Gastrocnemius medialis (tissue), 4 donors: ENCODE measurements at regions of chr18 and their contacts with region 1.

Region 1: DNA sequence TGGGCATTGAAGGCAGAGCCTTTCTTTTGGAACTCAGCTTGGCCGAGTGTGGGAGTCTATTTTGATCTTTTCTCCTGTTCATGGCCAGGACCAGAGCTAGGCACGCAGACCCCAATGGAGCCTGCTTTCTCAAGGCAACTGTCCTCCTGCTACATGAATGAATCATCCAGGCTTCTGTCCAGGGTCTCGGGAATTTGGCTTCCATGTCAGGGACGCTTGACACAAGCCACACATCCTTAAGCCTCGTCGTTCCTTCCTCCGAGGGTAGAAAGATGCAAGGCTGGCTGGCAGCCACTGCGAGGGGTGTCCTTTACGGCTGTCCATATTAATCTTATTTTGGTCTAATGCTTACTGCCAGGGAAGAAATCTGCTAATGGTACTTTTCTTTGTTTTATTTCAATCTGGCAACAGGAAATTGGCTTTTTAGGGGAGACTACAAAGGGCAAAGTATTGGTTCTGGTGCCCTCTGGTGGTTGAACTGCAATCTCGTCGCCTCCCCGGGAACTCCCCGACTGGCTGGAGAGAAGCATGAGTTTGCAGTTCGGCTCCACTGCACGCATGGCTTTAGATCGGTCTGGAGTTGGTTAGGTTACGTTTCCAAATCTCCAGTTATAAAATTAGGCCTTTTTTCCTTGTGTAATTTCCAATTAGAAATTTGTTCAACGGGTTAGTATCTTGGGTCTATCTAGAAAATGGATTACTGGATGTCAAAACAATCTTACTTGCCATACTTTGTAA is 135.2 kb downstream of the ALPK2 start:
- DNase-seq: peak; percentile 64 to 76
- ATAC-seq: peak; percentile 90 to 91
- H3K4me3 ChIP-seq: peak overlapping the region in 2 of 4 donors; percentile 21 to 23
- H3K27ac ChIP-seq: peak overlapping the region; percentile 56 to 80 (median 72)
- H3K4me1 ChIP-seq: peaks cover 19 to 30% of the 10 kb centered on the region in 2 donors
- H3K27me3 ChIP-seq: no peaks in the 10 kb centered on the region
- CTCF ChIP-seq: peak; percentile 78 to 86 (median 83)
- POLR2A ChIP-seq: no peak

Region 2: GRCh38 chr18:58223717-58224424 is 269.8 kb before region 1 on chr18:
- in situ Hi-C with region 1: loop called in 1 of 4 experiments (anchors 25 kb)
- intact Hi-C with region 1: no loop called
- DNase-seq: peak; percentile 33 to 53
- ATAC-seq: peak; percentile 98 to 99
- H3K4me3 ChIP-seq: peak overlapping the region in 2 of 4 donors; percentile 11 to 25
- H3K27ac ChIP-seq: peak overlapping the region; percentile 32 to 71 (median 64)
- H3K4me1 ChIP-seq: peaks cover 10 to 12% of the 10 kb centered on the region in 2 donors
- H3K27me3 ChIP-seq: no peaks in the 10 kb centered on the region
- CTCF ChIP-seq: no peak
- POLR2A ChIP-seq: no peak

Region 3: DNA sequence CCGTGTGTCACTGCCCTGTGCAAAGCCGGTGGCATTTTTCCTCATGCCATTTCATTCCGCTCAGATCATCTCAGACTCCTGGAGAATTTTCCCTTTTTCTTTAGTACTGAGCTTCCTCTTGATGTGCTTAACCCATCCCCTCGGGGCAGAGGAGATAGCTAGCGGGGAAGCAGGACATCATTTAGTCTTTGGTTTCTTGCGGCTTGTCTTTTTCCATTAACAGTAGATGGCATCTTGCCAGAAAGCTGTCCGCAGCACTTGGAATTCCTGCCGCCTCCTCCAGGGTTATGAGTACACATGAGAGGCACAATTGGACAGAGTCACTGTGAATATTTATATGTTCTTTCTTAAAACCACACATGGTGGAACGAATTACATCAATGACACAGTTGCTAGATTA is 91.4 kb before region 1 on chr18:
- in situ Hi-C with region 1: loop called (anchors 5 to 10 kb)
- intact Hi-C with region 1: loop called (anchors 1 kb)
- DNase-seq: no peak
- ATAC-seq: no peak
- H3K4me3 ChIP-seq: no peak overlapping the region
- H3K27ac ChIP-seq: no peak overlapping the region
- H3K4me1 ChIP-seq: peaks cover 0 to 16% of the 10 kb centered on the region in 2 donors
- H3K27me3 ChIP-seq: no peaks in the 10 kb centered on the region
- CTCF ChIP-seq: peak in 2 of 5 experiments; percentile 7 to 18
- POLR2A ChIP-seq: no peak

Region 4: DNA sequence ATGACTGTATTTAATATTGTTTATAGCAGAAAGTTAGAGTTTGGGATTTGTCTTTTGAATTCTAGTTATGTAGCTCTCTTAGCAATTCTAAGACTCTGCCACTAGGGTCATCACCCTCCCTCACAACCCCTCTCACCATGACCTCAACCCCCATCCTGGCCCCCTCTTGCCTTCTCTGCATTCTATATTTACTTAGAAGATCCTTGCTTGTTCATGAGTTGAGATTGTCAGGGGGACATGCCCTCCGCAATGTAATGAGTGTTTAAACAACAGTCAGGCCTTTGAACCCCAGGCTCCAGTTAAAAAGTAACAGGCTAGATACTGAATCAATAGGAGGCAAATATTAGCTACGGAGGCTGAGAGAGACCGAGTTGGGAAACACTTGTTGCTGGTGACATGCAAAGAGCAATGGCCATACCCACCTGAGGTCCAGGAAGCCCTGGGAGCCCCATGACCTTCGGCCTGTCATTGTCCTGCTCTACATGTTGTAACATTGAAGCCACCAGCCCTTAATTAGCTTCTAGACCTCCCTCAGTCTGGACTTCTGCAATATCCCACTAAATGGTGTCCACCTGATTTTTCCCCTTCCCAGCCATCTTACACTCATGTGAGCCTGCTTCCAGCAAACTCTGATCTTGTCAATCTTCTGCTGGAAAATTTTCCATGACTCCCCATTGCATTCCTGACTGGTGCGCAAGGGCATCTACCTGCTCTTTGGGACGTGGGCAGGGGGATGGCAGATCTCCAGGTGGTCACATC is 85.9 kb before region 1 on chr18:
- in situ Hi-C with region 1: loop called (anchors 5 to 10 kb)
- intact Hi-C with region 1: no loop called
- DNase-seq: no peak
- ATAC-seq: no peak
- H3K4me3 ChIP-seq: no peak overlapping the region
- H3K27ac ChIP-seq: no peak overlapping the region
- H3K4me1 ChIP-seq: peaks cover 2 to 4% of the 10 kb centered on the region in 2 donors
- H3K27me3 ChIP-seq: no peaks in the 10 kb centered on the region
- CTCF ChIP-seq: no peak
- POLR2A ChIP-seq: no peak

Region 5: GRCh38 chr18:58511897-58512581 is 18.4 kb after region 1 on chr18:
- in situ Hi-C with region 1: no loop called
- intact Hi-C with region 1: no loop called
- DNase-seq: no peak
- ATAC-seq: no peak
- H3K4me3 ChIP-seq: no peak overlapping the region
- H3K27ac ChIP-seq: no peak overlapping the region
- H3K4me1 ChIP-seq: no peaks in the 10 kb centered on the region
- H3K27me3 ChIP-seq: no peaks in the 10 kb centered on the region
- CTCF ChIP-seq: no peak
- POLR2A ChIP-seq: no peak